ENCODE measurements at regions of chr18 and their contacts with region 1.

Region 1: DNA sequence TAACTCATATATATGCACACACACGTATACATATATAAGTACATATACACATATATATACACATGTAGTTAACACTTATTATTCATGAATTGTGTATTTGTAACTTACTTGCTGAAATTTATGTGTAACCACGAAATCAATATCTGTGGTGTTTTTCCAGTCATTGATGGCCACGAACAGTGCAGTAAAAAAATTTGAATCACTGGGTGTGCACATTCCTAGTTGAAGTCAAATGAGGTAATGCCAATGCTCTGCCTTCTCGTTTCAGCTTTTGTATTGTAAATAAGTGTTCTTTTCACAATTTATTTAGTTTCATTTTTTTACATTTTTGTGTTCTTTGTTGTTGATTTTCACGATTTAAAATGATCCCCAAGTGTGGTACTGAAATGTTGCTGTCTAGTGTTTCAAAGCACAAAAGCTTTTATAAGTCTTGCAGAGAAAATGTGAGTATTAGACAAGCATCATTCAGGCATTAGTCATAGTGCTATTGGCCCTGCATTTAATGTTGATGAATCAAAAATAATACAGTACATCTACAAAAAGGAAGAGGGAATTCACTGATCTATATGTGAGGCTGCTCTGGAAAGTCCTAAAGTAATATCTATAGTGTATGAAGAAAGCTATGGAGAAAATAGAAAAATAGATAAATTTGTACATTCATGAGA is 419.0 kb downstream of the DSC3 start:
- DNase-seq: no peak
- H3K4me3 ChIP-seq: no peak overlapping the region
- H3K4me3 Mint-ChIP-seq: no peak overlapping the region
- H3K27ac ChIP-seq: no peak overlapping the region
- H3K27ac Mint-ChIP-seq: no peak overlapping the region
- H3K4me1 ChIP-seq: no peaks in the 10 kb centered on the region
- H3K4me1 Mint-ChIP-seq: no peaks in the 10 kb centered on the region
- H3K27me3 ChIP-seq: no peaks in the 10 kb centered on the region
- H3K27me3 Mint-ChIP-seq: no peaks in the 10 kb centered on the region

Region 2: GRCh38 chr18:30544141-30544540 is 79.4 kb before region 1 on chr18:
- CTCF ChIA-PET with region 1: no interaction called
- POLR2A ChIA-PET with region 1: no interaction called
- intact Hi-C with region 1: no loop called
- DNase-seq: no peak
- H3K4me3 ChIP-seq: no peak overlapping the region
- H3K4me3 Mint-ChIP-seq: no peak overlapping the region
- H3K27ac ChIP-seq: no peak overlapping the region
- H3K27ac Mint-ChIP-seq: no peak overlapping the region
- H3K4me1 ChIP-seq: no peaks in the 10 kb centered on the region
- H3K4me1 Mint-ChIP-seq: no peaks in the 10 kb centered on the region
- H3K27me3 ChIP-seq: no peaks in the 10 kb centered on the region
- H3K27me3 Mint-ChIP-seq: no peaks in the 10 kb centered on the region

Region 3: DNA sequence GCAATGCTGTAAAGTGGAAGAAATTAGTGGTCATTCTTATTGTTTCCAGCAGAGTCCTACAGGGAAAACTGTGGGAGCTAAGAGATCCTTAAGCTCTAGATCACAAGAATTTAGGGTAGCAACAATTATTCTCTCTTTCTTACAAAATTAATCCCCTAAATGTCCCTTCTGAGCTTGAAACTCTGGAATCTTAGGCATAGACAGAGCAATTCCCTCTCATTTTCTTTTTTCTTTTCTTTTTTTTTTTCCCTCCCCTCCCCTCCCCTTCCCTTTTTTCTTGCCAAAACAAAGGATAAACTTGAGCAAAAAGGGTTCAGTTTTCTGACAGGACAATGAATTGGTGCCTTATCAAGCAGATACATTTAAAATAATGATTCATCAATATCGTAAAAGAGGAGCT is 22.0 kb before region 1 on chr18:
- CTCF ChIA-PET with region 1: no interaction called
- POLR2A ChIA-PET with region 1: no interaction called
- intact Hi-C with region 1: loop called (anchors 1 kb)
- DNase-seq: no peak
- H3K4me3 ChIP-seq: no peak overlapping the region
- H3K4me3 Mint-ChIP-seq: no peak overlapping the region
- H3K27ac ChIP-seq: no peak overlapping the region
- H3K27ac Mint-ChIP-seq: no peak overlapping the region
- H3K4me1 ChIP-seq: no peaks in the 10 kb centered on the region
- H3K4me1 Mint-ChIP-seq: no peaks in the 10 kb centered on the region
- H3K27me3 ChIP-seq: no peaks in the 10 kb centered on the region
- H3K27me3 Mint-ChIP-seq: no peaks in the 10 kb centered on the region

Region 4: DNA sequence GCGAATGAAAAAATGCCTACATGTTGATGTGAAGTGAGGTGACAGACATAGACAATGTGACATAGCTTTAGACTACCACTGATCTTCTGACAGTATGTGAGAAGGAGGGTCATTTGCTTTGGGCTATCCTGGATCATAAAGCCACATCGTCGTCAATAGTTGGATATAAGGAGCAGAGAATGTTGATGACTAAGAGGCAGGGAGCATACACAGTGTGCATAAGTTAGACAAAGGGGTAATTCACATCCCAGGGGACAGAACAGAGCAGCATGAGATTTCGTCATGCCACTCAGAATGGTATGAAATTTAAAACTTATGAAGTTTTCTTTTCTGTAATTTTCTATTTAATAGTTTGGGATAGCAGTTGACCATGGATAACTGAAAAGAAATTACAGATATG is 15.8 kb after region 1 on chr18:
- CTCF ChIA-PET with region 1: no interaction called
- POLR2A ChIA-PET with region 1: no interaction called
- intact Hi-C with region 1: loop called (anchors 1 kb)
- DNase-seq: no peak
- H3K4me3 ChIP-seq: no peak overlapping the region
- H3K4me3 Mint-ChIP-seq: no peak overlapping the region
- H3K27ac ChIP-seq: no peak overlapping the region
- H3K27ac Mint-ChIP-seq: no peak overlapping the region
- H3K4me1 ChIP-seq: no peaks in the 10 kb centered on the region
- H3K4me1 Mint-ChIP-seq: no peaks in the 10 kb centered on the region
- H3K27me3 ChIP-seq: no peaks in the 10 kb centered on the region
- H3K27me3 Mint-ChIP-seq: no peaks in the 10 kb centered on the region

Measured in CD4-positive, alpha-beta memory T cell (primary cell).